Activated CD4-positive, alpha-beta T cell treated with anti-CD3 and anti-CD28 coated beads for 36 hours (primary cell): ENCODE measurements at regions of chr14 and their contacts with region 1.

Region 1: DNA sequence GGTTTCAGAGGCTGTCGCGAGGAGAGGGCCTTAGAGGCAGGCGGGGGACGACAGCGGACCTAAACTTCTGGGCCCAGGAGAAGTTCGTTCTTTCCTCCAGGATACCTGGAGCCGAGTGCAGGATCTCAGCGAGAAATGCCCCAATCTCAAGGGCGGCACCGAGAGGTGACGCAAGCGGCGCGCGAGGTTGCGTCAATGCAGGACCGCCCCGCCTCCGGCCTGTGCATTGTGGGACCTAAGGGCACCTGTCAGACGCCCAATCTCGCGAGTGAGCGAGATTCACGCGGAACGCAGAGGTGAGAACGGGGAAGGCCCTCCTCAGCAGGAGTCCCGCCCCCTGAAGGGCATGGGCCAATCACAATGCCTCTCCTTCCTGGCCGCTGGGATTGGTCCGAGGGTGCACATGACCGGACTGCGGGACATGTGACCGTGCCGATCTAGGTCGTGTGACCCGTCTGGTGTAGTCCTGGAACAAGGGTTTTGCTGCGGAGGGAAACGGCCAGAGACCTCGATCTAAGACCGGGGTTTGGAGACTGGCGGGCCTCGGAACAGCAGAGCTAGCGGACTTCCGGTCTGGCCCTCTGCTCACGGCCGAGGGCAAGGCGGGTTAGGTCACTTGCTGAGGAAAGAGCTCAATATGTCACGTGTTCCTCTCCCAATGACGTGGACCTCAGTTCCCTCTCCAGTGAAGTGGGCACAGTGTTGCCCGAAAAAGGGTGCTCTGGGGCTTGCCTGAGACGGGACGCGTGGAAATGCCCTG is 16.3 kb upstream of the DYNC1H1 start:
- DNase-seq: peak; percentile 100
- ATAC-seq: peak; percentile 98
- H3K4me3 Mint-ChIP-seq: peak overlapping the region; percentile 89
- H3K27ac Mint-ChIP-seq: peak overlapping the region; percentile 93
- H3K4me1 Mint-ChIP-seq: peaks cover 12% of the 10 kb centered on the region
- H3K27me3 Mint-ChIP-seq: peaks cover 17% of the 10 kb centered on the region

Region 2: DNA sequence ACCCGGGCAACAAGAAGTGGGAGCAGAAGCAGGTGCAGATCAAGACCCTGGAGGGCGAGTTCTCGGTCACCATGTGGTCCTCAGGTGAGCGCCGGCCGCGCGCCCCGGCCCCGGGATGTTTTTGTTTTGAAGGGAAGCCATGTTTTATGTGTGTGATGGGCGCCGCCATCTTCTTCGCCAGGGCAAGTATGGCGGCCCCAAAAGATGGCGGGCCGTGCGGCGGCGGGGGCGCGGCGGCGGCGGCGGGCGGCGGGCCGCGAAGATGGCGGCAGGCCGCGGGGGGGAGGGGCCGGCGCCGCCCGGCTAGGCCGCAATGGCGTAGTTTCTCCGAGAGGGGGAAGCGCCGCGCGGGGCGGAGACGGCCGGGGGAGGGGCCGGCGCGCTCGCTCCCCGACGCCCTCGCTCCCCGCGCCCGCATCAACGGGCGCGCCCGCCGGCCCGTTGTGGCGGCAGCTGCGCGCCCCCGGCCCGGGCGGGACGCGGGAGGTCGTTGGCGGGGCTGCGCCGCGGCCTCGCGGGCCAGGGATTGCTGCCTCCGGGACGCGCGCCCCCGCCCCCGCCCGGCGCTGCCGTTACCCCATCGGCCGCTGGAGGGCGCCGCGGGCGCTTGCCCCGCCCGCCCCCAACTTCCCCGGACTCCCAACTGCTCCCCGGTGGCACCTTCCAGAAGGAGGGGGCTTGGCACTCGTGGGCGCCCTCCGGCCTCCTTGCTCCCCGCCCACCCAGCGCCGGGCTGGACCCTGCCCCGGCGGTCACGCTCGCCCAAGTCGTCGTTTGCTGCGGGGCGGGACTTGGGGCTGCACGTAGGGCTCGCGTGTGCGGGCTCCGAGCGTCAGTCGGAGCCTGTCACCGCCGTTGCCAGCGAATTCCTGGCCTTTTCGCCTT is 1708.0 kb before region 1 on chr14:
- CTCF ChIA-PET with region 1: no interaction called
- POLR2A ChIA-PET with region 1: no interaction called
- intact Hi-C with region 1: loop called in 1 of 2 experiments (anchors 5 kb)
- DNase-seq: peak; percentile 93
- ATAC-seq: peak; percentile 40
- H3K4me3 Mint-ChIP-seq: peak overlapping the region; percentile 97
- H3K27ac Mint-ChIP-seq: peak overlapping the region; percentile 88
- H3K4me1 Mint-ChIP-seq: peaks cover 54% of the 10 kb centered on the region
- H3K27me3 Mint-ChIP-seq: no peaks in the 10 kb centered on the region

Region 3: DNA sequence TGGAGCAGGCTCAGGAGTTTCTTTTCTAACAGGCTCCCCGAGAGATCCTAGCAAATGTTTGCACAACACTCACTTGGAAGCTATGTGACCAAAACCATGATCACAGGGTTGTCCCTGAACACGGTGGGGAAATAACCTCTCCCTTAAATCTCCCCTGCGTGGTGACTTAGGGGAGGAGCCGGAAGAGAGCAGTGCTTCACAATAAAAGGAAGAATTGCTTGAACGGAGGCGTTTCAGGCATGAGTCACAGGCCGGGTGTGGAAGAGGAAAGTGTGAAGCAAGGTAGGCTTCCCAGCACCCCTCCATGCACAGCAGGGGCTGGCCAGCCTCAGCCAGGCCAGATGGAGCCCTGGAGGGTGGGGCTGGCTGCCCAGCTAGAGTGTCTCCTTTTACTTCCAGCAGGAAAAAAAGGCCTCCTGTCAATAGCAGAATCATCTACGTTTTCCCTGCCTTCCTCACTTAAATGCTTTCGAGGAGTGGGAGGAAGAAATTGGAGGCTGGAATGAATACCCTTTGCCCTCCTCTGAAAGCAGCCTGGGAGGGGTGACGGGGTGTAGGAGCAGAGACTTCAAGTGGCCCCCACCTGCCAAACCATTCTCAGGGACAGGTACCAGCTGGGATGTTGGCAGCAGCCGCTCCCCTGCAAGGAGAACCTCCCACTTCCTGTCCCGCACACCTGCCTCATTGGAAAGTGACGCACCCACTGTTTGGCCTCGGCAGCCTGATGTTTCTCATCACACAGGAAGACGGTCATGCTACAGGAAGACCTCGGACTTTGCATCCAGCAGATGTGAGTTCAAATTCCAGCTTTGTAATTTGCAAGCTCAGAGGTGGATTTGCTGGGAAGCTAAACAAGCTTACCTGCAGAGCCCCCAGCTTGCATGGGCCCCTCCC is 216.7 kb before region 1 on chr14:
- CTCF ChIA-PET with region 1: no interaction called
- POLR2A ChIA-PET with region 1: no interaction called
- intact Hi-C with region 1: loop called in 1 of 2 experiments (anchors 1 kb)
- DNase-seq: peak; percentile 94
- ATAC-seq: peak; percentile 92
- H3K4me3 Mint-ChIP-seq: peak overlapping the region; percentile 66
- H3K27ac Mint-ChIP-seq: peak overlapping the region; percentile 97
- H3K4me1 Mint-ChIP-seq: peaks cover 64% of the 10 kb centered on the region
- H3K27me3 Mint-ChIP-seq: no peaks in the 10 kb centered on the region

Region 4: GRCh38 chr14:101843665-101844064 is 104.4 kb before region 1 on chr14:
- CTCF ChIA-PET with region 1: no interaction called
- POLR2A ChIA-PET with region 1: no interaction called
- intact Hi-C with region 1: loop called in 1 of 2 experiments (anchors 5 kb)
- DNase-seq: peak; percentile 78
- ATAC-seq: peak; percentile 66
- H3K4me3 Mint-ChIP-seq: no peak overlapping the region
- H3K27ac Mint-ChIP-seq: peak overlapping the region; percentile 82
- H3K4me1 Mint-ChIP-seq: peaks cover 87% of the 10 kb centered on the region
- H3K27me3 Mint-ChIP-seq: no peaks in the 10 kb centered on the region

Region 5: GRCh38 chr14:101964297-101965144 is 16.4 kb after region 1 on chr14 and contains the start of gene DYNC1H1:
- CTCF ChIA-PET with region 1: interaction called, 12 read pairs
- POLR2A ChIA-PET with region 1: no interaction called
- intact Hi-C with region 1: loop called (anchors 1 kb)
- DNase-seq: peak; percentile 93
- ATAC-seq: peak; percentile 82
- H3K4me3 Mint-ChIP-seq: peak within 1 kb of the TSS; percentile 89
- H3K27ac Mint-ChIP-seq: peak within 1 kb of the TSS; percentile 91
- H3K4me1 Mint-ChIP-seq: peaks cover 39% of the 10 kb centered on the region
- H3K27me3 Mint-ChIP-seq: no peaks in the 10 kb centered on the region
- total RNA-seq, gene DYNC1H1: 283 to 293 TPM

Region 6: DNA sequence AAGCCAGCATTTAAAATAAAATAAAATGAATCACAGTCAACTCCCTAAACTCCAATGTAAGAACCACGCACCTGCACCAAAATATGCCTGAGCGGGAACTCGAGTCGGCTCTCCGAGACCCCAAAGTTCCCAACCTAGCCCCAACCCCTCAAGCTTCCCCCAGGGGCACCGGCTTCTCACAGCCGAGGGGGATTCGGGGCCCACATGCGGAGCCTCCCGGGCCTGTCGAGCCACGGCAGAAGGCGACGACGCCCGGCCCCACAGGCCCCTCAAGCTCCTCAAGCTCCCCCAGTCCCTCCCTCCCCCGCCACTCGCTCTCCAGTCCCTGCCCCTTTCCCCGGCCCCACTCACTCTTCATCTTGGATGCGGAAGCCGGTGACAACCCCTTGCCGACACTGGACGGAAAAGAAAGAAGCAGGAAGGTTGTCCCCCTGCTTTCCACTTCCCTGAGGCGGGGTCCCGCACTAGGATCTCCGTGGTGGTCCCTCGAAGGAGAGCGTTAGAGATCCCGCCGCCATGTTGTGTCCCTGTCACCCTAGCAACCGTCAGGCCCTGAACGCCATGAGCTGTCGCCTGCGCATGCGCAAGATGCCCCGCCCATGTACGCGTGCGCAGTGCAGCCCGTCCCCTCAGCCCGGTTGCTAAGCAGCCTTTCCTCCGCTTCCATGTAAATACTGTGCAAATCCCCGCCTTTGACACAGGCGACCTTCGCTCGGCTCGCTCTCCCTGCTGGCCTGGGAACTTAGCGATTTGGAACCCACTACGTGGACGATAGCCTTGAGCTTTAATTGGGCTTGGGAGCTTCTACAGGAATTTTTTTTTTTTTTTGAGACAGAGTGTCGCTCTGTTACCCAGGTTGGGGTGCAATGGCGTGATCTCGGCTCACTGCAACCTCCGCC is 356.8 kb after region 1 on chr14 and contains the start of gene MOK:
- CTCF ChIA-PET with region 1: no interaction called
- POLR2A ChIA-PET with region 1: no interaction called
- intact Hi-C with region 1: loop called in 1 of 2 experiments (anchors 1 kb)
- DNase-seq: peak; percentile 97
- ATAC-seq: peak; percentile 98
- H3K4me3 Mint-ChIP-seq: peak within 1 kb of the TSS; percentile 93
- H3K27ac Mint-ChIP-seq: peak within 1 kb of the TSS; percentile 60
- H3K4me1 Mint-ChIP-seq: peaks cover 5% of the 10 kb centered on the region
- H3K27me3 Mint-ChIP-seq: no peaks in the 10 kb centered on the region
- total RNA-seq, gene MOK: 6.5 to 6.6 TPM

Region 7: GRCh38 chr14:102509744-102510615 is 561.9 kb after region 1 on chr14 and contains the start of gene ANKRD9:
- CTCF ChIA-PET with region 1: no interaction called
- POLR2A ChIA-PET with region 1: no interaction called
- intact Hi-C with region 1: loop called in 1 of 2 experiments (anchors 1 kb)
- DNase-seq: peak; percentile 95
- ATAC-seq: peak; percentile 89
- H3K4me3 Mint-ChIP-seq: peak within 1 kb of the TSS; percentile 75
- H3K27ac Mint-ChIP-seq: peak within 1 kb of the TSS; percentile 51
- H3K4me1 Mint-ChIP-seq: peaks cover 16% of the 10 kb centered on the region
- H3K27me3 Mint-ChIP-seq: peaks cover 2% of the 10 kb centered on the region
- total RNA-seq, gene ANKRD9: 4.8 to 9.3 TPM